GM12878 (cell line): ENCODE measurements at regions of chr2 and their contacts with region 1.

Region 1: GRCh38 chr2:64144057-64145013 is at the start of gene PELI1:
- DNase-seq: peak; percentile 96
- ATAC-seq: peak; percentile 86
- H3K4me3 ChIP-seq: peak within 1 kb of the TSS; percentile 95
- H3K27ac ChIP-seq: peak within 1 kb of the TSS; percentile 85
- H3K4me1 ChIP-seq: peaks cover 3% of the 10 kb centered on the region
- H3K27me3 ChIP-seq: no peaks in the 10 kb centered on the region
- CTCF ChIP-seq: peak; percentile 13 to 49 (median 34); a peak in 3 of 6 replicates
- EP300 ChIP-seq: no peak
- POLR2A ChIP-seq: peak; percentile 97
- RAD21 ChIP-seq: peak; percentile 36; the same call in 1 of the 2 replicates
- polyA plus RNA-seq, gene PELI1: 12.1 to 13.2 TPM

Region 2: GRCh38 chr2:63569740-63570139 is 574.6 kb before region 1 on chr2:
- CTCF ChIA-PET with region 1: no interaction called
- POLR2A ChIA-PET with region 1: no interaction called
- RAD21 ChIA-PET with region 1: no interaction called
- SMC1A ChIA-PET with region 1: no interaction called
- in situ Hi-C with region 1: no loop called
- intact Hi-C with region 1: no loop called
- DNase-seq: peak; percentile 16
- ATAC-seq: peak; percentile 71
- H3K4me3 ChIP-seq: no peak overlapping the region
- H3K27ac ChIP-seq: no peak overlapping the region
- H3K4me1 ChIP-seq: no peaks in the 10 kb centered on the region; the same call in 1 of the 2 replicates
- H3K27me3 ChIP-seq: no peaks in the 10 kb centered on the region
- CTCF ChIP-seq: no peak
- EP300 ChIP-seq: no peak
- POLR2A ChIP-seq: no peak
- RAD21 ChIP-seq: no peak

Region 3: DNA sequence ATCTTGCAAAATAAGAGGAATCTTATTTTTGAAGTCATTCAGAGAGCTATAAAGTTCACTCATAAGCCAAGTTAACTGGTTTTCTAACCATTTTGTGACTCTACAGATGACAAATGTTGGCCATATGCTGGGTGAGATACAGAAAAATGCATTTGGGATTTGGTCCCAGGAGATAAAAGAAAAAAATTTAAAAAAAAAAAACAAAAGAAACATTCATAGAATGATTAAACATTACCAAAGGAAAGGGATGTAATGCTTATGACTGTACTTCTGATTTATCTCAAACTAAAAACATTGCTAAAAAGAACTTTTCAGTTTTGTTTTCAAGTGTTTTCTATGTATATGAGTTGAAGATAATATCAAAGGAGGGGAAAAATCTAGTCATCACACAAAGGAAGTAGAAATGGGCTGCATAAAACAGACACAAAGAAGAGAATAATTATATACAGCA is 43.2 kb before region 1 on chr2:
- CTCF ChIA-PET with region 1: interaction called, 3 read pairs
- POLR2A ChIA-PET with region 1: interaction called, 7 read pairs
- RAD21 ChIA-PET with region 1: interaction called, 38 read pairs
- SMC1A ChIA-PET with region 1: interaction called, 53 read pairs
- in situ Hi-C with region 1: no loop called
- intact Hi-C with region 1: no loop called
- DNase-seq: no peak
- ATAC-seq: peak; percentile 68
- H3K4me3 ChIP-seq: peak overlapping the region; percentile 26; the same call in 1 of the 2 replicates
- H3K27ac ChIP-seq: peak overlapping the region; percentile 80
- H3K4me1 ChIP-seq: peaks cover 46% of the 10 kb centered on the region
- H3K27me3 ChIP-seq: no peaks in the 10 kb centered on the region
- CTCF ChIP-seq: no peak
- EP300 ChIP-seq: no peak
- POLR2A ChIP-seq: no peak
- RAD21 ChIP-seq: no peak

Region 4: DNA sequence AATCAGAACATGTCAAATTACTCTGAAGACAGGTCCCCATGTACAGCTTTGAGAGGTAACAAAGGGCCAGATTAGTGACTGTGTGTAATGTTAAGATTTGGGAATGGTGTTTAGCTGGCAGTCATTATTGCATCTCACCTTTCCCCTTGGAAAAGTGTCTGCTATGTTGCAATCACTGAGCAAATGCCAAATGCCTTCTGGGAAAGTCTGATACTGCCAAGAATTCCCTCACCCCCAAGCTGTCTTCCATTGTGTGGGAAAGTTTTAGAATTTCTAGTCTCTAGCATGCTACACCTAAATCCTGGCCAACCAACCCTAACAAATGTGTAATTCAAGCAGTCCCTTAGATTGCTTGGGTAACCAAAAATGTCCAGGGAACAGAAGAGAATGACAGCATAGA is 13.5 kb after region 1 on chr2:
- CTCF ChIA-PET with region 1: interaction called, 12 read pairs
- POLR2A ChIA-PET with region 1: interaction called, 5 read pairs
- RAD21 ChIA-PET with region 1: no interaction called
- SMC1A ChIA-PET with region 1: interaction called, 16 read pairs
- in situ Hi-C with region 1: no loop called
- intact Hi-C with region 1: no loop called
- DNase-seq: no peak
- ATAC-seq: no peak
- H3K4me3 ChIP-seq: no peak overlapping the region
- H3K27ac ChIP-seq: no peak overlapping the region
- H3K4me1 ChIP-seq: no peaks in the 10 kb centered on the region
- H3K27me3 ChIP-seq: no peaks in the 10 kb centered on the region
- CTCF ChIP-seq: no peak
- EP300 ChIP-seq: no peak
- POLR2A ChIP-seq: no peak
- RAD21 ChIP-seq: no peak

Region 5: DNA sequence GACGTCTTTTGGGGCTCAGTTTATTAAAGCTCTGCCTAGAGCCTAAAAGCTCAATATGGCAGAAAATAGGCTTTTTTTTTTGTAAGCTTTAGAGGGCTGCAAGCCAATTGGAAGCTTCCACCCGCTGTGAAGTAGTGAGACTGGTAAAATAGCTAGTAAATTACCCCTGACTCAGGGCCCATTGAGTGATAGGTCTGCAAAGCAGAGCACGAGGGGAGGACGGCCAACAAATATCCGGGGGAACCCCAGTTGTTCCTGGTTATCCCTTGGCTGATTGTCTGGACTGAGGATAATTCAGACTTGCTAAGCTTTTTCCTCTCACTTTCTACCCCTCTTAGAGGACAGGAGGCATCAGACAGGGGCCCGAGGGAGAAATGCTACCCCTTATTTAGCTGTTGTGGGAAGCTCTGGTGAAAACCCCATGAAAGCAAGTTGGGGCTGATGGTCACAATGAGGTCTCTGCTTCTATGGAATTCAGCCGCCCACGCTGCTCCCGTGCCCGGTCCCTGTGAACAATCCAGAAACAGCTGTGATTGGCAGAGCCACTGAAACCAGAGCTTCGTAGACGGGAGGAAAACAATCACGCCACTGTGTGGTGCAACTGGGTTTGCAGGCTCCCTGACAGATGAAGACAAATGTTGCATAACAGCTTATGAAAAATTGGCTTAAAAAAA is 167.8 kb after region 1 on chr2:
- CTCF ChIA-PET with region 1: interaction called, 9 read pairs
- POLR2A ChIA-PET with region 1: interaction called, 3 read pairs
- RAD21 ChIA-PET with region 1: interaction called, 13 read pairs
- SMC1A ChIA-PET with region 1: no interaction called
- in situ Hi-C with region 1: no loop called
- intact Hi-C with region 1: no loop called
- DNase-seq: no peak
- ATAC-seq: peak; percentile 80
- H3K4me3 ChIP-seq: no peak overlapping the region
- H3K27ac ChIP-seq: no peak overlapping the region
- H3K4me1 ChIP-seq: no peaks in the 10 kb centered on the region
- H3K27me3 ChIP-seq: no peaks in the 10 kb centered on the region
- CTCF ChIP-seq: peak in 2 of 3 experiments; percentile 38 to 55; a peak in 3 of 6 replicates
- EP300 ChIP-seq: no peak
- POLR2A ChIP-seq: no peak
- RAD21 ChIP-seq: no peak

Region 6: DNA sequence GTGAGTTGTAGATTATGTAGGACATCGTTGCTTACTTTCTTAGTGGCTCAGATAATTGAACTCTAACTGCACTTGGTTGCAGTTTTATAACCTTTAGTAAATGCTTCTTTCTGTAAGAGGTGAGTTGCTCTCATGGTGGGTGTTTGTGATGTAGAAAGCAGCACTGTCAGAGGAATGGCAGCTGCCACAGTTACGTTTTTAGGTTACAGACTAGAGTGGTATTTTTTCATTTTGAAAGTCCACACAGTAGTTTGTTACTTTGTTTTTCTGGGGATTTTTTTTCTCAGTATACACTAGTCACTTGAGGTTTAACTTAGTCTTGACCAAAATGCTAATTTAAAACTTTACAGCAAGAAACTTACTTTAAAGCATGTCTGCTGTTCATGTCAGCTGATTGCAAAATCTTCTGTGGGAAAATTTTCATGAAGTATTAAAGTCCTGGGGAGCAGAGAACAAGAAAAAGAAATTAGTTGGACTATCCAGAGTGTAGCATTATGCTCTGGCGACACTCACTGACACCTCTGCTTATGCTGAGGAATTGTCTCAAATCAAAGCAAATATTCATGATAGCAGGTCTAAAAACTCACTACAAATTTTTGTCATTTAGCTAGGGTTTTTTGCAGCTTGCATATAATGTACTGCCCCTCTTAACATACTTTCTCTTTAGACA is 394.6 kb after region 1 on chr2:
- CTCF ChIA-PET with region 1: no interaction called
- POLR2A ChIA-PET with region 1: interaction called, 4 read pairs
- RAD21 ChIA-PET with region 1: no interaction called
- SMC1A ChIA-PET with region 1: no interaction called
- in situ Hi-C with region 1: no loop called
- intact Hi-C with region 1: loop called (anchors 5 kb)
- DNase-seq: peak; percentile 49
- ATAC-seq: peak; percentile 57
- H3K4me3 ChIP-seq: peak overlapping the region; percentile 14; the same call in 1 of the 2 replicates
- H3K27ac ChIP-seq: peak overlapping the region; percentile 71
- H3K4me1 ChIP-seq: peaks cover 48% of the 10 kb centered on the region; the same call in 1 of the 2 replicates
- H3K27me3 ChIP-seq: no peaks in the 10 kb centered on the region
- CTCF ChIP-seq: no peak
- EP300 ChIP-seq: no peak
- POLR2A ChIP-seq: no peak
- RAD21 ChIP-seq: no peak